ENCODE measurements at regions of chr3 and their contacts with region 1.

Region 1: DNA sequence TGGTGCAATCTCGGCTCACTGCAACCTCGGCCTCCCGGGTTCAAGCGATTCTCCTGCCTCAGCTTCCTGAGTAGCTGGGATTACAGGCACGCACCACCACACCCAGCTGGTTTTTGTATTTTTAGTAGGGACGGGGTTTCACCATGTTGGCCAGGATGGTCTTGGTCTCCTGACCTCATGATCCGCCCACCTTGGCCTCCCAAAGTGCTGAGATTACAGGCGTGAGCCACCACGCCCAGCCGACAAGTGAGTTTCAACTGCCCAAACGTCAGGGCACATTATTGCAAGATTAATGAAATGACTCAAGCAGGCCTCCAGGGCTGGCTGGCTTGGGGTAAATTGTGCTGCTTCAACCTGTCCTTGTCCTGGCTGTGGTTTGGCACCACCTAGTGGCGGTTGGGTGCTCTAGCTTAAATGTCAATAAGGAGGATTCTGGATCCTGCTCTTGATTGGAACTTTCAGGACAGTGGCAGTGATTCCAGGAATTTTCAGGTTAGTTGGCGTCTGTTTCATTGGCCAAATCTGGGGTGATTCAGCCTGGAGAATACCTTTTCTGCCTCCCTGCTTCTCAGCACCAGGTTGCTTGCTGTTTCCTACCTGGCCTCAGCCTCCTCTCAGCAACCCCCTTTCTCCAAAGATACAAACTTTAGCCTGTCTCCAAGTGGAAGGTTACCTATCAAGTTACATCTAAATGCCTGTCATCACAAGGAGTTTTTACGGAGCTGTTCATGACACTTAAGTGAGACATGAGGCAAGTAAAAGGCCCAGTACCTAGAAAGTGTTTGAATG is 32.4 kb upstream of the SACM1L start:
- DNase-seq: peak; percentile 93
- H3K4me3 ChIP-seq: no peak overlapping the region
- CTCF ChIP-seq: peak; percentile 90

Region 2: GRCh38 chr3:45037734-45038455 is 618.9 kb before region 1 on chr3:
- in situ Hi-C with region 1: loop called (anchors 25 kb)
- DNase-seq: peak; percentile 86
- H3K4me3 ChIP-seq: no peak overlapping the region
- CTCF ChIP-seq: peak; percentile 86

Region 3: GRCh38 chr3:45426161-45426560 is 230.6 kb before region 1 on chr3:
- in situ Hi-C with region 1: no loop called
- DNase-seq: no peak
- H3K4me3 ChIP-seq: no peak overlapping the region
- CTCF ChIP-seq: no peak

Region 4: DNA sequence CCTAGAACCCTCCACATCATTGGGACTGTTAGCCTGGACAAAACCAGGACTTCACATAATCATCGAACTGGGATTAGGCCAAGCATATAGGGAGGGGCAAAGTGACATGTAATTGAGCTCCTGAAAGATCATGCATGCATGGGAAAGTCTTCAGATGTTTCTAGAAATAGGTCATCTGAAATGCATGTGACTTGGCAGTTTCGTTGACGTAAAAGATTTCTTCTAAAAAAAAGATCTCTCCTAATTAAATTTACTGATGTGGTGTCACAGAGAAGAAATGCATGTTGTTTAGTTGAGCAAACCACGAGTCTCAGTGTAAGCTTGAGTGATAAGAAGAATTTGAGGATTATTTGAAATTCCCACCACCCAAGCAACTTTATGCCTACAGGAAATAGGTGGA is 132.2 kb before region 1 on chr3:
- in situ Hi-C with region 1: loop called (anchors 5 kb)
- DNase-seq: no peak
- H3K4me3 ChIP-seq: no peak overlapping the region
- CTCF ChIP-seq: no peak

Region 5: GRCh38 chr3:45575381-45575923 is 81.3 kb before region 1 on chr3:
- in situ Hi-C with region 1: loop called (anchors 5 kb)
- DNase-seq: peak; percentile 67
- H3K4me3 ChIP-seq: no peak overlapping the region
- CTCF ChIP-seq: no peak